ENCODE measurements at regions of chr12 and their contacts with region 1.

Region 1: DNA sequence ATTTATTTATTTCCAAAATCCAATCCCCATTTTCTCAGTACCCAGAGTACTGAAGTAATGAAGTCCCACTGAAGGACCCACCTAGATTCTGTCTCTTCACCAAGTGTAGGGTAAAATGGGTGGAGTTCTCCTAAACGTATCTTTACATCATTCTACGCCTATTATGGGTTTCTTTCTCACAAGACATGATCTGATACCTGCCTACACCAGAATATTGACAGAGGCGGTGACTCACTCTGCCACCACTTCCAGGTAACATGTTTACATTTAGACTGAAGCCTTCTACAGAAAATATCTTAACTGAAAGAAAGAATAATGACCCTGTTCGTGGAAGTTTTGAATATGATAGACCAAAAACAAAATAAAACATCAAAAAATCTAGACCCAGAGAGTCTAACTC is 89.8 kb downstream of the BTG1 start:
- DNase-seq: no peak
- H3K4me3 ChIP-seq: no peak overlapping the region
- H3K27ac ChIP-seq: no peak overlapping the region
- H3K4me1 ChIP-seq: peaks cover 11% of the 10 kb centered on the region
- H3K27me3 ChIP-seq: no peaks in the 10 kb centered on the region
- CTCF ChIP-seq: no peak
- POLR2A ChIP-seq: no peak

Region 2: DNA sequence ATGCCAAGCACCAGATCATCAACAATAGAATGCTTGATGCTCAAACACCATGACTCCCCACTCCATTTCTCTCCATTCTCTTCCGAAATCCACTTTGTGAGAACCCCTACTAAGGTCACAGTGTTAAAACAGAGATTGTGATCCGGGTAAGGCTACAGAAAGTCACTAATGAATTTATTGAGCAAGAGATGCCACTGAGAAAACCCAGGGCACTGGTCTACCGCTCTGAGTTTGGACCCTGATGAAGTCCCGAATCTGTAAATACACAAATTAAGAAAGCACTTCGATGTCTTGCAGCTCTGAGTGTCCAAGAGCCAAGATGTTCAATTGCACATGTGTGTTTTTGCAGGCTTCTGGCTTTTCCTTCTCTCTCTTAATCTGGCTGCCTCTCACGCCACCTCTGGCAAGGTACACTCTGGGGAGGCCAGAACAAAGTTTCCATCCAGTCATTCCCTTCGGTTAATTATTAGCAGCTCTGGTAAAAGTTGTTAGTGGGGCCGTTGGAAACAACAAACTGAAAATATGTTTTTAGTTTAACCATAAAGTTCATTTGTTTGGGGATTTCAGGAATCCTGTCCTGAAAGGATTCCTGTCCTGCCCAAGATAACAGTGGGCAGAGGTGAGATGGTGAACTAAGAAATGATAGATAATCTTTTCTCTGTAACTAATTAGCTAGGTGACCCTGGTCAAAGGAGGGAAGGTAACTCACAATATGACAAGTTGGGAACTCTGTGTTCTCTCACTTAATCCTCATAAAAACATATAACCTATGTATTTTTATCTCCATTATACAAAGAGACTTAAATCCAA is 14.4 kb after region 1 on chr12:
- intact Hi-C with region 1: loop called (anchors 1 kb)
- DNase-seq: no peak
- H3K4me3 ChIP-seq: no peak overlapping the region
- H3K27ac ChIP-seq: no peak overlapping the region
- H3K4me1 ChIP-seq: peaks cover 18% of the 10 kb centered on the region
- H3K27me3 ChIP-seq: no peaks in the 10 kb centered on the region
- CTCF ChIP-seq: no peak
- POLR2A ChIP-seq: no peak

Region 3: DNA sequence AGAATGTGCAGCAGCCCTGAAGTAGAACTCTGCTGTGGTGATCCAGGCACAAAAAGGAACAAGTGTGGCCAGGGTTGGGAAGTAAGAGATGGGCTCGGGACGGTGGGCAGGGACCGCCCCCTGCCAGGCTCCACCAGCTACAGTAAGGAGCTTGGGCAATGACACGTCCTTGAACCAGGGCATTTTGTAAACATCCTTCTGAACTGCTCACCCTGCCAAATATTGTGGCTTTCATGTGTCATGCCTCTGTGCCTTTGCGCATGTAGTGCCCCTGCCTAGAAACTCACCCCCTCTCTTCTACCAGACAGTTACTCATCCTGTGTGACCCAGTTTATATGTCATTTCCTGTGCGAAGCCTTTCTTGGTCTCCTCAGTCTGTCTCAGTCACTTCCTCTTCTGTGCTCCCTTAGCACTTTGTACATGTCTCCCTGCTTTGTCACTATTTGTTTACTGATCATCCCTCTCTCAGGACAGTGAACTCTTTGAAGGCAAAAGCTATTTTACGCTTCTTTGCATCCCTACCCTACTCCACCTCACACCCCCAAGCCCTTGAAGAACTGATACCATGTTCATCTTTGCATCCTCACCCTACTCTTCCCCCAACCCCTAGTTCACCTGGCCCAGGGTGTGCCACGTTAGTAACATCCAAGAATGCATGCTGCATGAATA is 538.0 kb after region 1 on chr12:
- intact Hi-C with region 1: loop called (anchors 5 kb)
- DNase-seq: no peak
- H3K4me3 ChIP-seq: no peak overlapping the region
- H3K27ac ChIP-seq: peak overlapping the region; percentile 38
- H3K4me1 ChIP-seq: no peaks in the 10 kb centered on the region
- H3K27me3 ChIP-seq: no peaks in the 10 kb centered on the region
- CTCF ChIP-seq: no peak
- POLR2A ChIP-seq: no peak